ENCODE measurements at regions of chr17 and their contacts with region 1.

Region 1: DNA sequence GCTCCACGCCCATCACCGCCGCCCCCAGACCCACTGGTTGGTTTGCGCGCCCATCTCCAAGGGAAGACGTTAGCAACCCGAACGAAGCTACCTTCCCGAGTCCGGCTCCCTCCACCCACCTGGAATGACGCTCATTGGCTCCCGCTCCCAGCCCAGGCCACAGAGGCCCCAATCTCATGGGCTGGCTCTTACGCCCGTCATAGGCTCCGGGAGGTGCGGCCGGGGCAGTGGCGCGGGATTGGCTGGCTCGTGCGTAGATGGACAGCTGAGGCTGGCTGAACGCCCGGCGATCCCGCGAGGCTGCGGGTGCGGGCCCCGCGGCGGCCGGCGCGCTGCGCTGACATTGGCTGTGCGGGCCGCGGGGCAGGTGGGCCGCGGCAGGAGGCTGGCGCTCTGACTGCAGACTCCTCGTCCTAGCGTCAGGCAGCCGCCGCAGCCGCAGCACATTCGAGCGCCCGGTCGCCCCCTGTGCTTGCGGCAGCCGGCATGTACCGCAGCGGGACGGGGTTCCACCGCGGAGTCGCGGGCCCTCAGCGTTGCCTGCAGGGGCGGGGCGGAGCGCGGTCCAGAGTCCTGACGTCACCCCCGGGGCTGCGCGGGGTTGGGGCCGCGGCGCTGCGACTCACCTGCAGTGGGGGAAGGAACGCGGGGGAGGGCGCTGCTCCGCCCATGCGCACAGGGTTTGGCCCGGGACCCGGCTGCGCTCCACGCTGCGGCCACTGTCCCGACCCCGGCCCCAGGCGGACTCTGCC is 453 bp upstream of the MYH10 start:
- DNase-seq: peak; percentile 100
- H3K4me3 ChIP-seq: peak overlapping the region; percentile 92
- H3K27ac ChIP-seq: peak overlapping the region; percentile 21
- H3K27me3 ChIP-seq: no peaks in the 10 kb centered on the region
- CTCF ChIP-seq: peak; percentile 9; the same call in 1 of the 2 replicates

Region 2: GRCh38 chr17:8581002-8581658 is 49.8 kb before region 1 on chr17:
- CTCF ChIA-PET with region 1: no interaction called
- POLR2A ChIA-PET with region 1: no interaction called
- DNase-seq: no peak
- H3K4me3 ChIP-seq: no peak overlapping the region
- H3K27ac ChIP-seq: no peak overlapping the region
- H3K27me3 ChIP-seq: no peaks in the 10 kb centered on the region
- CTCF ChIP-seq: no peak

Region 3: DNA sequence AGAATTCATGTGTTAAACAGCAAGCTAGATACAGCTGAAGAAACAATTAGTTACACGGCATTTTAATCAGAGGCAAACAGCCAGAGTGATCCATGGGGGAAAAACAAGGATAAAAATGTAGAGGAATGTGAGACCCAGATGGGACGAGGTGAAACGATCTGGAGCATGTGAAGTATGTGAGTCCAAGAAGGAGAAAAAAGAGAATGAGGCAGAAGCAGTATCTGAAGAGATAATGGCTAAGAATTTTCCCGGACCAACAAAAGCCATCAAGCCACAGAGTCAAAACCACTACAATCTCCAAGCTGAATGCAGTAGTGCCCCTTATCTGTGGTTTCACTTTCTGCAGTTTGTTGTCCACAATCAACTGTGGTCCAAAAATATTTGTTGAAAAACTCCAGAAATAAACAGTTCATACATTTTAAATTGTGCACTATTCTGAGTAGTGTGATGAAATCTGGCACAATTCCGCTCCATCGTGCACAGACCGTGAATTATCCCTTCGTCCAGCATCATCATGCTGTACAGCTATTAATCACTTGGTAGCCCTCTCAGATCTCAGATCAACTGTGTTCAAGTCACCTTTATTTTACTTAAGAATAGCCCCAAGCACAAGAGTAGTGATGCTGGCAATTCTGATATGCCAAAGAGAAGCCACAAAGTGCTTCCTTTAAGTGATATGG is 19.2 kb before region 1 on chr17:
- CTCF ChIA-PET with region 1: interaction called, 4 read pairs
- POLR2A ChIA-PET with region 1: interaction called, 14 read pairs
- DNase-seq: no peak
- H3K4me3 ChIP-seq: peak overlapping the region; percentile 29; the same call in 1 of the 2 replicates
- H3K27ac ChIP-seq: no peak overlapping the region
- H3K27me3 ChIP-seq: no peaks in the 10 kb centered on the region
- CTCF ChIP-seq: no peak

Region 4: GRCh38 chr17:8698162-8699061 is 67.4 kb after region 1 on chr17:
- CTCF ChIA-PET with region 1: no interaction called
- POLR2A ChIA-PET with region 1: interaction called, 28 read pairs
- DNase-seq: peak; percentile 69
- H3K4me3 ChIP-seq: peak overlapping the region; percentile 5; the same call in 1 of the 2 replicates
- H3K27ac ChIP-seq: peak overlapping the region; percentile 98
- H3K27me3 ChIP-seq: peaks cover 6% of the 10 kb centered on the region
- CTCF ChIP-seq: 0 out of 2 replicates have a peak, but pooled peaks have one; percentile 16

Region 5: DNA sequence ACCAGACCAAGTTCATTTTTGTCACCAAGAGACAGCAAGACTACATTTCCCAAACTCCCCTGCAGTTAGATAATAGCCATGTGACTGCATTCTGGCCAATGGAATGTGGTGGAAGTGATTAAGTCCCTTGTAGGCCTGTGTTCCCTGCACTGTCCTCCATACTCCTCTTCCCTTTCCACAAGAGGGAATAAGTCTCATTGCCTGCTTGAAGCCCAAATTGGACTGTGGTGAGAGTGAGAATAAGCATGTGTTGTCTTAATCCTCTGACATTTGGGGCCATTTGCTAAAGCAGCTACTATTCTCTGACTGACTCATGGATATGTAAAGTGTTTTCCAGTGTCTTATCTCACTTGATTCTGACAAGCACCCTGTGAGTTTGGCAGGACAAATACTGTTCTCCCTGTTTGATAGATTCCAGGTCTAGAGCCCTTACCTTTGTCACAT is 215.8 kb after region 1 on chr17:
- CTCF ChIA-PET with region 1: no interaction called
- POLR2A ChIA-PET with region 1: no interaction called
- DNase-seq: no peak
- H3K4me3 ChIP-seq: no peak overlapping the region
- H3K27ac ChIP-seq: no peak overlapping the region
- H3K27me3 ChIP-seq: no peaks in the 10 kb centered on the region
- CTCF ChIP-seq: no peak

Measured in AG04450 (cell line).